Right ventricle myocardium inferior (tissue), 1 donor: ENCODE measurements at regions of chrX and their contacts with region 1.

Region 1: DNA sequence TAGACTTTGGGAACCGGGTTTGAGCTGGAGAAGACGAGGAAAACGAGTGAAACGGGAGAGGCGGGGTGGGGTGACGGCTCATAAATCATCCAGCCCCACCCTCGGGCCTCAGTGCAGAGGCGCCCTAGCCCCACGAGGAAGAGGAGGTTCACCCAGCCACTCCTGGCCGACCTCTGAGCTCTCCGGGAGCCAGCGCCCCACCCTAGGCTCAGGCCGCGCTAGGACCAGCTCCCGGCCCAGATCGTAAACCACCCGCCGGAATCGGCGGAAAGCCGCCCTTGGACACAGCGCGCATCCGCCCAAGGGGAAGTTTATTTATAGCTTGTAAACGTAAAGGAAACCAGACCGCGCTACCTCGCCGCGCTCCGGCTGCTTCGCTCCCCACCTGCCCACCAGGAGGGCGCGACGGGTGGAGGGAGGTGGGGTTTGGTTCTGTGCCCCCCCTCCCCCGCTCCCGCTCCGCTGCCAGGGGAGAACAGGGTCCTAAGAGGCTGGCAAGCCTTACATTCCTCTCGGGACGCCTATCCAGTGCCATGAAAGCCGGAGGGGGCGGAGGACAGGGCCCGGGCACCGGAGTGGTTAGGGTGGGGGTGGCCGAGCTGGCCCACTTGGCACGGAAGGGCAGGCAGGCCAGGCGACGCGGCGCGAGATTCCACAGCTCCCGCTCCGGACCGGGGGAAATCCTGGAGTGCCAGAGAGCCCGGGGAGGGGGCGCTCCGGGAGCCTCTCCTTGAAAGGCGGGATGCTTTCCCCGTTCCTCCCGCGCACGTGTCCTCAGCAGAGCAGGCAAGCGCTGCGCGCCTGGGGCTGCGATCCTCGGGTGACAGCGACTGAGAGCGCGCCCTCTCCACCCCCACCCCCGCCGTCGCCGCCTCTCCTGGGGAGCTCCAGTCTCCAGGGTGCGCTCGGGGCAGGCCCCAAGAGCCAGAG is 84.2 kb downstream of the BCOR start:
- DNase-seq: peak; percentile 84
- ATAC-seq: peak; percentile 68

Region 2: GRCh38 chrX:39820938-39821708 is 192.4 kb before region 1 on chrX:
- intact Hi-C with region 1: loop called (anchors 5 kb)
- DNase-seq: no peak
- ATAC-seq: peak; percentile 45

Region 3: DNA sequence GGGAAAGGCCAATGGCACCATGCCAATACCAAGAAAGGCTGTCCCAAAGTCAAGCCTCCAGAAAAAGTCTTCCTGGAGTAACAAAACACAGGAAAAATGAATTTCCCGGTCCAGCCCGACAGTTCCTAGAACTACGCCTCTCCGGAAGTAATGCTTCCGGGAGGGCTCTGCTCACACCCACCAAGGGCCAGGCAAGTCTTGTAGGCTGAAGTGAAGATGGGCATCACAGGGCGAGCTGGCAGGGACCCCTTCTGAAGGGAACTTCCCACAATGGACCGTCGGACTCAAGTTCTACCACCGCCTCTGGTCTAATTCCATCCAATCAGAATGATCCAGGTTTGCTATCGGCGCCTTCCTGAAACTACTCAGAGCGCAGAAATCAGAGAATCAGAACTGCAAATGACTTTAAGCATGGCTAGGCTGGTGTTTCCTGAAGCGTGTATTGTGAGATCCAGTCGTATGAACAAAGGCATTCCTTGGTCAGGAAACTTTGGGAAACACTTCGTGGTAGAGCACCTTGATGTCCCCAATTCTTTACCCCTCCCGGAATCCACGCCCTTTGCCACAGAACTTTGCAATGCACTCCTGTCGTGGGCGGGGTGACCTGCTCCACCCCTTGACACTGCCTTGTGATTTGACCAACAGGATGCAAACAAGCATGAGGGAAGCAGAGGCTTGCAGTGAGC is 43.6 kb before region 1 on chrX:
- intact Hi-C with region 1: loop called (anchors 1 kb)
- DNase-seq: no peak
- ATAC-seq: no peak

Region 4: GRCh38 chrX:40153335-40154249 is 140.1 kb after region 1 on chrX:
- intact Hi-C with region 1: loop called (anchors 5 kb)
- DNase-seq: peak; percentile 84
- ATAC-seq: peak; percentile 15

Region 5: DNA sequence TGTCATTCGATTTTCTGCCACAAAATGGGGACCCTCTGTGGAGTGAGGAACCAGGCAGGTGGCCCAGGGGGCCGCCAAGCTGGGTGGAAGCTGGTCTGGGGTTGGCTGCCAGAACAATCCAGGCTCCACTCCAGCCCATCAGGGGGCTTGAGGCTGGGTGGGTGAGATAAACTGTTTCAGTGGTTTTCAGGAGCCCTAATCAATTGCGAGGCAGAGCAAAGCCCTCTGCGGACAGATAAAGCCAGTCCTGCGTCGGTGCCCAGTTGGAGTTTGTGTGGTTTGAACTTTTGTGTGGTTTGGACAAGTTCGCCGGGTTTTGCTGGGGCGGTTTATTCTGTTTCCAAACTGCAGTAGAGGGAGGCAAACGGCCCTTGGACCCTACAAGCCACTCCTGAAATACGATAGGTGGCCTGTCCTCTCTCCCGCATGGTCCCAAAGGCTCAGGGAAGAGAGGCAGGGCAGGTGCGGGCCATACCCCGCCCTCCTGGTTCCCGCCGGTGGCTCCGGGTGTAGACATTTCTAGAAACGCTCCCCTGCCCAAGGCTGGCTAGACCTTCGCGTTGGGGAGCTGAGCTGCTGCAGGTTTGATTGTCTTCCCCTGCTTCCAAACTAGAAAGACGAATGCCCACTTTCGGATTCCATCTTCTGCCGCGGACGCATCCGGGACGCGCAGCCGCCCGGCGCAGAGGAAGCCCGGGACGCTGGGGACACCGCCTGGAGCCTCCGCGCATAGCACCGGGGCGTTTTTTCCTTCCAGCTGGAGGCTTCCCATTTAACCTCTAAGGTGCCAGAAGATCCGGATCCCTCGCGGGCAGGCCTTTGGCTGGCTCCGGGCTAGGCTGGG is 253.2 kb after region 1 on chrX:
- intact Hi-C with region 1: loop called (anchors 5 kb)
- DNase-seq: peak; percentile 80
- ATAC-seq: peak; percentile 85